A549 (cell line): ENCODE measurements at regions of chr20 and their contacts with region 1.

Region 1: GRCh38 chr20:2470423-2471193 is at the start of gene SNRPB:
- DNase-seq: peak; percentile 99 to 100
- ATAC-seq: peak; percentile 97 to 98
- H3K4me3 ChIP-seq: peak within 1 kb of the TSS; percentile 67
- H3K27ac ChIP-seq: peak within 1 kb of the TSS; percentile 92 to 93
- H3K4me1 ChIP-seq: peaks cover 25% of the 10 kb centered on the region
- CTCF ChIP-seq: no peak
- EP300 ChIP-seq: no peak
- POLR2A ChIP-seq: peak; percentile 91
- RAD21 ChIP-seq: no peak
- polyA plus RNA-seq, gene SNRPB: 486 and 557 TPM in 2 replicates

Region 2: DNA sequence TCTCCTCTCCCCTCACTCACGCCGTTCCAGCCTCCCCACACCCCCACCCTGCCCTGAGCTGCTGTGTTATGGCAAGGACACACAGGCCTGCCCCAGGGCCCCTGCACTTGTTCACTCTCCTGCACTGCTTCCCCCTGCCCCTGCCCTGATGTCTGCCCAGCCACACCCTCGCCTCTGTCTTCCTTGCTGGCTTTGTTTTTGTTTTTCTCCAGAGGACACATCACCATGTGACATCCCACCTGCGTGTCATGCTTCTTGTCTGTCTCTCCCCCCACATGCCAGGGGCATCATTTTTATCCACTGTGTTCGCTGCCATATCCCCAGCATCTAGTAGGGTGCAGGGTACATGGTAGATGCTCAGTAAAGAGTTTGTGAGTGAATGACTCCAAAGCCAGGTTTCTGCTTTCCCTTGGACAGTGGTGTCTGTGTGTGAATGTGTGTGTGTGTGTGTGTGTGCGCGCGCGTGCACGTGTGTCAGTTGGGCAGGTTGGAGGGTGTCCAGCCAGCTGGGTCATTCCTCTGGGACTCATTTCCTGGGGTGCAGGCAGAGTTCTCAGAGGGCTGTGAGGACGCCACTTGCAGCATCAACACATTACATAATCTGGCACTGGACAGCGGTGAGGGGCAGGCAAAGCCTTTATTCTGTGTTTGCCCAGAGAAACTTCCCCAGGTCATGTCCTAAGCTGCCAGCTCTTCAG is 308.3 kb before region 1 on chr20:
- CTCF ChIA-PET with region 1: no interaction called
- POLR2A ChIA-PET with region 1: no interaction called
- DNase-seq: no peak
- ATAC-seq: no peak
- H3K4me3 ChIP-seq: no peak overlapping the region
- H3K27ac ChIP-seq: no peak overlapping the region
- H3K4me1 ChIP-seq: no peaks in the 10 kb centered on the region
- CTCF ChIP-seq: no peak
- EP300 ChIP-seq: no peak
- POLR2A ChIP-seq: no peak
- RAD21 ChIP-seq: no peak

Region 3: GRCh38 chr20:2508631-2509467 is 38.2 kb after region 1 on chr20 and contains the start of gene ZNF343:
- CTCF ChIA-PET with region 1: no interaction called
- POLR2A ChIA-PET with region 1: interaction called, 11 read pairs
- DNase-seq: peak; percentile 86 to 98
- ATAC-seq: peak; percentile 98 to 99
- H3K4me3 ChIP-seq: peak within 1 kb of the TSS; percentile 68
- H3K27ac ChIP-seq: peak within 1 kb of the TSS; percentile 86 to 89
- H3K4me1 ChIP-seq: peaks cover 12% of the 10 kb centered on the region
- CTCF ChIP-seq: no peak
- EP300 ChIP-seq: no peak
- POLR2A ChIP-seq: peak; percentile 84
- RAD21 ChIP-seq: no peak
- polyA plus RNA-seq, gene ZNF343: 19.0 and 20.5 TPM in 2 replicates

Region 4: DNA sequence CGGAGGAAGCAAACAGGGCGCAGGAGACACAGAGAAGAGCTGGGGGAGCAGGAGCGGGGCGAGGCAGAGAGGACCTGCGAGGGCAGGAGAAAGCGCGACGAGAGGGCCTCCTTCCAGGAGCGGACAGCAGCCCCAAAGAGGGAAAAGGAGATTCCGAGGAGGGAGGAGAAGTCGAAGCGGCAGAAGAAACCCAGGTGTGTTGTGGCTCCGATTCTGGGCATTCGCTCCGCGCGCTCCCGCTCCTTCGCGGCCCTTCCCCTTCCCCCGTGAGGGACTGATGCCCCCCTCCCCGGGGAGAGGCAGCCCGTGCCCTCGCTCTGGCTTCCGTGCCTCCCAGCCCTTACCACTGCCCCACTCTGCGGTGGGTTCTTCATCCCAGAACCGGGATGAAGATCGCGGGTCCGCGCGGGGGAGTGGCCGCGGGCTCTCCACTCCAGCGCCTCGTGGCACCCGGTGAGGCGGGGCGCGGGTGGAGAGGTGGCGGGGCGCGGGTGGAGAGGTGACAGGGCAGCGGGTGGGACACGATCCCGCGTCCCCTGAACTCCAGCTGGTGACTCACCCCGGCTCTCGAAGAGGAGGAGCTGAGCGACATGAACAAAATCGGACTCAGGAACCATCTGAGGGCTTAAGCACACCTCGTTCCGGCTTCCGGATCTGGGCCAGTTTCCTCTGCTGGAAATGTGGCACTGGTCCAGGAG is 88.1 kb after region 1 on chr20:
- CTCF ChIA-PET with region 1: no interaction called
- POLR2A ChIA-PET with region 1: no interaction called
- DNase-seq: peak in 1 of 2 experiments; percentile 21
- ATAC-seq: peak; percentile 37 to 41; a peak in 3 of 6 replicates
- H3K4me3 ChIP-seq: peak overlapping the region; percentile 18; the same call in 1 of the 3 replicates
- H3K27ac ChIP-seq: no peak overlapping the region
- H3K4me1 ChIP-seq: no peaks in the 10 kb centered on the region
- CTCF ChIP-seq: no peak
- EP300 ChIP-seq: no peak
- POLR2A ChIP-seq: no peak
- RAD21 ChIP-seq: no peak